CD4-positive, alpha-beta memory T cell (primary cell): ENCODE measurements at regions of chr6 and their contacts with region 1.

Region 1: GRCh38 chr6:134247231-134247833 is 70.6 kb downstream of the SGK1 start:
- DNase-seq: peak; percentile 85 to 95 (median 92)
- H3K4me3 ChIP-seq: peak overlapping the region in 1 of 2 donors; percentile 5
- H3K4me3 Mint-ChIP-seq: peak overlapping the region; percentile 60 to 82 (median 76)
- H3K27ac ChIP-seq: peak overlapping the region; percentile 60
- H3K27ac Mint-ChIP-seq: peak overlapping the region; percentile 90 to 99 (median 98)
- H3K4me1 ChIP-seq: peaks cover 63% of the 10 kb centered on the region
- H3K4me1 Mint-ChIP-seq: peaks cover 43 to 65% (median 54%) of the 10 kb centered on the region in 4 donors
- H3K27me3 ChIP-seq: no peaks in the 10 kb centered on the region
- H3K27me3 Mint-ChIP-seq: no peaks in the 10 kb centered on the region

Region 2: DNA sequence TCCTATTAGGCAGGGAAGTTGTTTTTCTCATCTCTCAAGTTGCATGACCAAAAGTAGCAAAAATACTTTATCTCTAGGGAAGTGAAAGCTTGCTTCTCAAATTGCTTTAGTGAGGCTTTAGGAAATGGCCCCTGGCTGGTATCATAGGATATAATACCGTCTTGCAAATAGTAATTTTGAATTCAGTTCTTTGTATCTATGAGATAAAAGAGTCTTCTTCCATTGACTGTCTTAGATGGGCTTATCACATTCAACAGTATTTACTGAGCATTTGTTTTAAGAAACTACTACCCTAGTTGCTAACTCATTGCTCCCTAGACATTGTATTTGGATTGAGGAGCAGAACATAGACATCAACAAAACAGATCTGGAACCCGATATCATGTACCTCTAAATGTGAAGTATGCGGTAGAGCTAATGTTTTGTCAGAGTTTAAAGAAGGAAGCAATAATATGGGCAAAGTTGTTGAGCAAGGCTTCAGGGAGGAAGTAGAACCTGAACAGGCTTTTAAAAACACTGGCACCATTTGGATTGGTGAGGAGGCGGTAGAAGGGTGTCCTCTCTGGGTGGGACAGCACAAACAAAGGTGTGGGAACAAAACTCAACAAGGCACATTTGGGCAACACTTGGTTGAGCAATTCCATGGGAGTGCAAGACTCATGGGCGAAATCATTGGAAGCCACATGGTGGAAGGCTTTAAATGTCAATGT is 30.9 kb before region 1 on chr6:
- CTCF ChIA-PET with region 1: no interaction called
- POLR2A ChIA-PET with region 1: no interaction called
- intact Hi-C with region 1: no loop called
- DNase-seq: no peak
- H3K4me3 ChIP-seq: no peak overlapping the region
- H3K4me3 Mint-ChIP-seq: peak overlapping the region in 1 of 8 donors; percentile 21
- H3K27ac ChIP-seq: no peak overlapping the region
- H3K27ac Mint-ChIP-seq: peak overlapping the region in 2 of 7 donors; percentile 15 to 80
- H3K4me1 ChIP-seq: no peaks in the 10 kb centered on the region
- H3K4me1 Mint-ChIP-seq: peaks cover 2 to 11% (median 8%) of the 10 kb centered on the region in 4 donors
- H3K27me3 ChIP-seq: no peaks in the 10 kb centered on the region
- H3K27me3 Mint-ChIP-seq: no peaks in the 10 kb centered on the region

Region 3: DNA sequence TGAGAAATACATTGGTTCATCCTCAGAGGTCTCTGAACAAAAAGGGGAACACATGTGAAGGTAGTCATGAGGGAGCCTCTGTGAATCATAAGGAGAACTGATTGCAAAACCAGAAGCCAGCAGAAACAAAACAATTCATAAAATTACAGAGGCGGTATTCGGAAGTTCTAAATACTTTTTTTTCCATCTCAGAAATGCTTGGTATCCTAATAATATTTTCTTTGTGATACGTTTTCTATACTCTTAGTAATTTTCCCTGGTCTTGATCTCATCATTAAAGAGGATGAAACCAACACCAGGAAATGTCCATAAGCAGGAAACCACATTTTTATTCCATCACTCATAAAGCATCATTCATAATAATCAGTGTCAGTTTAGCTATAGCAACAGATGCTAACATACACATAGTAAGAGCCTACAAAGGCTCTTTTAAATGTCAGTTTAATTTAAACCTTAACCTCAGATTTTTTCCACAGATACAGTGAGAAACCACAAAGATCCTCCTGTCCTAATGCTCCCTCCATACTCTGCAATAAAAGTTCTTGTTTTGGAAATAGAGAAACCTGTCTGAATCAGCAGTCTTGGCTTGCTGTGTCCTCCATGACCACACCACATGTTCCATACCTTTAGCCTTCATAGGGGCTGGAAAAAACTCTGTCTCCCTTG is 41.3 kb after region 1 on chr6:
- CTCF ChIA-PET with region 1: no interaction called
- POLR2A ChIA-PET with region 1: interaction called, 5 read pairs
- intact Hi-C with region 1: loop called (anchors 2 kb)
- DNase-seq: peak; percentile 11 to 53 (median 38)
- H3K4me3 ChIP-seq: no peak overlapping the region
- H3K4me3 Mint-ChIP-seq: peak overlapping the region in 5 of 8 donors; percentile 2 to 58 (median 47)
- H3K27ac ChIP-seq: no peak overlapping the region
- H3K27ac Mint-ChIP-seq: peak overlapping the region in 6 of 7 donors; percentile 13 to 78 (median 38)
- H3K4me1 ChIP-seq: peaks cover 18% of the 10 kb centered on the region
- H3K4me1 Mint-ChIP-seq: peaks cover 15 to 20% (median 18%) of the 10 kb centered on the region in 4 donors
- H3K27me3 ChIP-seq: no peaks in the 10 kb centered on the region
- H3K27me3 Mint-ChIP-seq: no peaks in the 10 kb centered on the region

Region 4: GRCh38 chr6:134340179-134340975 is 93.0 kb after region 1 on chr6:
- CTCF ChIA-PET with region 1: no interaction called
- POLR2A ChIA-PET with region 1: no interaction called
- intact Hi-C with region 1: no loop called
- DNase-seq: no peak
- H3K4me3 ChIP-seq: no peak overlapping the region
- H3K4me3 Mint-ChIP-seq: no peak overlapping the region
- H3K27ac ChIP-seq: no peak overlapping the region
- H3K27ac Mint-ChIP-seq: no peak overlapping the region
- H3K4me1 ChIP-seq: no peaks in the 10 kb centered on the region
- H3K4me1 Mint-ChIP-seq: peaks cover 0 to 9% (median 4%) of the 10 kb centered on the region in 4 donors
- H3K27me3 ChIP-seq: no peaks in the 10 kb centered on the region
- H3K27me3 Mint-ChIP-seq: no peaks in the 10 kb centered on the region